ENCODE measurements at regions of chr7 and their contacts with region 1.

Region 1: DNA sequence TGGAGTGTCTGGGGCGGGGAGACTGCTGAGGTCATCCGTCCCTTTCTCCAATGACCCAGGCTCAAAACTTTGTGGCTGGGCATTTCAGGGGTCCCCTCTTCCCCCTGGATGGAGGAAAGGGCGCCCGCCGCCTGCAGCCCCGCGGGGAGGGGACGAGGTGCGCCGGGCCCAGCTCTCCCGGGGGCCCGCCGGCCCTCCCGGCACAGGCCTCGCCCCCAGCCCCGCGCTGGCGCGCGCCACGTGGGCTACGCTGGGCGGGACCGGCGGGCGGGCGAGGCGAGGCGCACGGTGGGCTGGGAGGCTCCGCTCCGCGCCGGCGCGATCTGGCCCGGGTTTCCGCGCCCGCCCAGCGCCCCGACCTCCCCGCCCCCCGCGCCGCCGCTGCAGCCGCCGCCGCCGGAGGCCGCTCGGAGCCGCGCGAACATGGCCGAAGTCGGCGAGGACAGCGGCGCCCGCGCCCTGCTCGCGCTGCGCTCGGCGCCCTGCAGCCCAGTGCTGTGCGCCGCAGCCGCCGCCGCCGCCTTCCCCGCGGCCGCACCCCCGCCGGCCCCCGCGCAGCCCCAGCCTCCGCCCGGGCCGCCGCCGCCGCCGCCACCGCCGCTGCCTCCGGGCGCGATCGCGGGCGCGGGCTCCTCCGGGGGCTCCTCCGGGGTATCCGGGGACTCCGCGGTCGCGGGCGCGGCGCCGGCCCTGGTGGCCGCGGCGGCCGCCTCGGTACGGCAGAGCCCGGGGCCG is at the start of gene FOXK1:
- DNase-seq: no peak
- H3K4me3 ChIP-seq: peak within 1 kb of the TSS; percentile 74 to 97 (median 90)
- H3K27ac ChIP-seq: peak within 1 kb of the TSS; percentile 94 to 95 (median 94)
- H3K4me1 ChIP-seq: peaks cover 19 to 47% (median 43%) of the 10 kb centered on the region in 4 donors
- H3K27me3 ChIP-seq: no peaks in the 10 kb centered on the region
- CTCF ChIP-seq: no peak
- EP300 ChIP-seq: no peak
- POLR2A ChIP-seq: no peak
- total RNA-seq, gene FOXK1: 23.4 to 46.1 (median 36.3) TPM

Region 2: GRCh38 chr7:4460597-4461137 is 221.4 kb before region 1 on chr7:
- intact Hi-C with region 1: no loop called
- DNase-seq: no peak
- H3K4me3 ChIP-seq: no peak overlapping the region
- H3K27ac ChIP-seq: no peak overlapping the region
- H3K4me1 ChIP-seq: peaks cover 0 to 11% (median 8%) of the 10 kb centered on the region in 4 donors
- H3K27me3 ChIP-seq: peaks cover 0 to 5% (median 0%) of the 10 kb centered on the region in 4 donors
- CTCF ChIP-seq: no peak
- EP300 ChIP-seq: no peak
- POLR2A ChIP-seq: no peak

Region 3: DNA sequence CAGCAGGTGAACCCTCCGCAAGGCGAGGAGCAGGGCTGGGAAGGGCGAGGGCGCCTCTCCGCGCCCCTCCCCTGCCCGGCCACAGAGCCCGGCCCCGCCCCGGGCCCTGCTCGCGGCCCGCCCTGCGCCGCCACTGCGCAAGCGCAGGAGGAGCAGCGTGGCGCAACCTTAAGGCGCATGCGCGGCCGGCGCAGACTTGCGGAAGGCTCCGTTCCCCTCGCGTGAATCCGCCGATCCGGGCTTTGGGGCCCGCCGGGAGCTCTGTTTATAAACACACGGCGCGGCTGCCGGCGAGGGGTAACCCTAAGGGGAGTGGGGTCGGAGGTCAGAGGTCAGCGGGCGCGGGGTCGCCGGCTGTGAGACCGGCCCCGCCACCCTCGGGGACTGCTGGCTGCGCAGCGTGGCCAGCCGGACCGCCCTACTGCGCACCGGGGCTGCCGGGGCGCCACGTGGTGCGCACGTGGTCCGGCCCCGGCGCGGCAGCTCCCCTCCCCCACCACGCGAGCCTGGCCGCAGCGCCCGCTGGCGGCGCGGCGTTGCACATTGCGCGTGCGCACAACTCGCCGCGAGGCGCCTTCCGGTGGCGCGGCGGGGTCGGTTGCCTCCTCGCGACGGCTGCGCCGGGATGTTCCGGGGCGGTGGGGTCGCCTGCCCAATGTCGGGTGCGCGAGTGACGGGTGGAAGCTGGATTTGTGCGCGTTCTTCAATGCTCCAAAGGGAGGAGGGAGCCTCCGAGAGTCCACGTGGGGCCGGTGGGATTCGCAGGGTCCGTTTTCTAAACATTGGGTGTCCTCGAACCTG is 40.2 kb before region 1 on chr7:
- intact Hi-C with region 1: loop called (anchors 1 kb)
- DNase-seq: peak; percentile 98
- H3K4me3 ChIP-seq: peak overlapping the region; percentile 62 to 73 (median 69)
- H3K27ac ChIP-seq: peak overlapping the region; percentile 84 to 95 (median 88)
- H3K4me1 ChIP-seq: peaks cover 4 to 16% (median 15%) of the 10 kb centered on the region in 4 donors
- H3K27me3 ChIP-seq: peaks cover 0 to 5% (median 0%) of the 10 kb centered on the region in 4 donors
- CTCF ChIP-seq: peak; percentile 59 to 65 (median 61)
- EP300 ChIP-seq: no peak
- POLR2A ChIP-seq: peak; percentile 70

Region 4: GRCh38 chr7:4744391-4745264 is 62.6 kb after region 1 on chr7:
- intact Hi-C with region 1: loop called (anchors 2 kb)
- DNase-seq: peak; percentile 99
- H3K4me3 ChIP-seq: peak overlapping the region; percentile 36 to 53 (median 40)
- H3K27ac ChIP-seq: peak overlapping the region; percentile 86 to 94 (median 90)
- H3K4me1 ChIP-seq: peaks cover 52 to 81% (median 72%) of the 10 kb centered on the region in 4 donors
- H3K27me3 ChIP-seq: no peaks in the 10 kb centered on the region
- CTCF ChIP-seq: no peak
- EP300 ChIP-seq: peak; percentile 6
- POLR2A ChIP-seq: peak; percentile 2

Region 5: DNA sequence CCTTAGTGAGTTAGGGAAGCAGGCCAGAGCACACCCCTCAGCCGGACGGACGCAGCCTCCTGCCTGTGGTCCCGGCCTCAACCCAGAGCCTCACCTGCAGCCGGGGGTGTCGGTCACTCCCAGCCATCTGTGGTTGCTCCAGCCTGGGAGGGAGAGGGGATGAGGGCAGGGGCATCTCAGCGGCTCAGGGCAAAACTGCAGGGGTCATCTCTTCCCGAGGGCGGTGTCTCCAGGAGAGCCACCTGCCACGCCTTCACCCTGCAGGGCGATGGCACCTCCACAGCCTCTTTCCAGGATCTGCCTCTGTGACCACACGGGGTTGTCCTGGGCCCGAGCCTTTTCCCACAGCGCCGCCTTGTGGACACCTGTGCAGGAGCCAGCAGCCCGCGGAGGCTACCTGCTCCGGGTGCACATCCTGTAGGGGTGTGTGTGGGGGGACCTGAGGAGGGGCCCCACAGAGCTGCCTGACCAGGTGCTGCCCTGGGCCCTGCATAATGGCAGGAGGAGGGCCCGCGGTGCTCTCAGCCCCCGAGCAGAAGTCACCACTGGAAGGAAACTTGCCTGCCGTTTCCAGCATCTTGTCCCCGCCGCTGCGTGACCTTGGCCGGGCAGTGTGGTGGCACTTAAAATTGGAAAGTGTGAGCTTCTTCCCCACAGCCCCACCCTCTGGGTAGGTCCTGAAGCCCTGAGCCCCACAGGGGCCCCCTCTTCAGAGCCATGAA is 71.8 kb after region 1 on chr7:
- intact Hi-C with region 1: loop called (anchors 2 kb)
- DNase-seq: no peak
- H3K4me3 ChIP-seq: no peak overlapping the region
- H3K27ac ChIP-seq: peak overlapping the region; percentile 28 to 70 (median 46)
- H3K4me1 ChIP-seq: peaks cover 17 to 39% (median 31%) of the 10 kb centered on the region in 4 donors
- H3K27me3 ChIP-seq: no peaks in the 10 kb centered on the region
- CTCF ChIP-seq: peak; percentile 87 to 94 (median 93)
- EP300 ChIP-seq: no peak
- POLR2A ChIP-seq: no peak